ENCODE measurements at regions of chr11 and their contacts with region 1.

Region 1: GRCh38 chr11:65314501-65315203 is at the start of gene CDC42EP2:
- DNase-seq: no peak
- ATAC-seq: peak; percentile 97
- H3K4me3 ChIP-seq: peak within 1 kb of the TSS; percentile 95
- H3K27ac ChIP-seq: no peak within 1 kb of the TSS
- H3K4me1 ChIP-seq: no peaks in the 10 kb centered on the region
- H3K27me3 ChIP-seq: peaks cover 0 to 1% of the 10 kb centered on the region in 2 experiments; a peak in 2 of 4 replicates
- CTCF ChIP-seq: no peak
- EP300 ChIP-seq: no peak
- POLR2A ChIP-seq: no peak
- RAD21 ChIP-seq: no peak
- polyA plus RNA-seq, gene CDC42EP2: 0.07 TPM in 1 of 2 experiments, not detected in the other

Region 2: GRCh38 chr11:65204646-65205601 is 109.7 kb before region 1 on chr11:
- CTCF ChIA-PET with region 1: interaction called, 43 read pairs
- POLR2A ChIA-PET with region 1: no interaction called
- RAD21 ChIA-PET with region 1: interaction called, 3 read pairs
- SMC1A ChIA-PET with region 1: no interaction called
- in situ Hi-C with region 1: no loop called
- intact Hi-C with region 1: loop called (anchors 2 kb)
- DNase-seq: no peak
- ATAC-seq: peak; percentile 90
- H3K4me3 ChIP-seq: no peak overlapping the region
- H3K27ac ChIP-seq: no peak overlapping the region
- H3K4me1 ChIP-seq: no peaks in the 10 kb centered on the region
- H3K27me3 ChIP-seq: no peaks in the 10 kb centered on the region
- CTCF ChIP-seq: peak; percentile 73 to 96 (median 81)
- EP300 ChIP-seq: no peak
- POLR2A ChIP-seq: no peak; the same call in 1 of the 2 replicates
- RAD21 ChIP-seq: peak; percentile 60

Region 3: DNA sequence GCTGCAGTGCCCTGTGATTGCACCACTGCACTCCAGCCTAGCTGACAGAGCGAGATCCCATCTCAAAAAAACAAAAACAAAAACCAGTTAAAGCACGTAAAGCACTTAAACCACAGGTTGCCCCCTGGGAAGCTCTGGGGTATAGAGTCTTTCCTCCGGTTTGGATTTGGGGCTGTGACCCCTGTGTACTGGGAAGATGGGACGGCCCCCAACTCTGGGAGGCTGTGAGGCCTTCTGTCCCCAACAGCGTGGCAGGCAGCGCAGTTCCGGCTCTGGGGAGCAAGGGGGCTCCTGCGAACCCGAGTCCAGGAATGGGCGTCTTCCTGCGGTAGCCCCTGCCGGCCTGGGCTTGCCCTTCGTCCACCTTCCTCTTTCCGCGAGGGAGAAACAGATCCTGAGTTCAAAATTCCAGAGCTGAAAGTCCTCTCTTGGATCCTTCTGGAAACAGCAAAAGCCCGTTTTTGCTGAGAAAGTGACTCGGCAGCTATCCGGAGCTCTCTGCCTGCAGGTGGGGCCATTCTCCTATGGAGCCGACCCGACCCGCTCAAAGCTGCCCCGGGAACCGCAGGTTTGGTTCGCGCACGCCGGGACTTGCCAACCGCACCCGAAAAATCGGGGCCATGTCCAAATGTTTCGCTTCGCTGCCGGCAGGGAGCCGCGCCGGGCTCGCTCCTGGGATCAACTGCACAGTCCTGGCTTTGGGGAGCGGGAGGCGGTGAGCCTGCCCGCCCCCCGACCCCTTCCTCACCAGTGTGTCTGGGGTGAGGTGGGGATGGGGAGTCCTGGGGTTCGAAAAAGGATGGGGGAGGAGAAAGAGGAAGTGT is 89.2 kb before region 1 on chr11:
- CTCF ChIA-PET with region 1: interaction called, 96 read pairs
- POLR2A ChIA-PET with region 1: interaction called, 5 read pairs
- RAD21 ChIA-PET with region 1: interaction called, 21 read pairs
- SMC1A ChIA-PET with region 1: interaction called, 30 read pairs
- in situ Hi-C with region 1: no loop called
- intact Hi-C with region 1: loop called (anchors 2 kb)
- DNase-seq: no peak
- ATAC-seq: peak; percentile 92
- H3K4me3 ChIP-seq: peak overlapping the region; percentile 58
- H3K27ac ChIP-seq: no peak overlapping the region; the same call in 1 of the 2 replicates
- H3K4me1 ChIP-seq: peaks cover 11% of the 10 kb centered on the region
- H3K27me3 ChIP-seq: no peaks in the 10 kb centered on the region; a peak in 1 of 4 replicates
- CTCF ChIP-seq: peak; percentile 52 to 63 (median 53)
- EP300 ChIP-seq: no peak
- POLR2A ChIP-seq: 0 out of 2 replicates have a peak, but pooled peaks have one; percentile 28
- RAD21 ChIP-seq: peak; percentile 55

Region 4: GRCh38 chr11:65274735-65275682 is 39.6 kb before region 1 on chr11:
- CTCF ChIA-PET with region 1: interaction called, 351 read pairs
- POLR2A ChIA-PET with region 1: interaction called, 29 read pairs
- RAD21 ChIA-PET with region 1: interaction called, 254 read pairs
- SMC1A ChIA-PET with region 1: interaction called, 180 read pairs
- in situ Hi-C with region 1: no loop called
- intact Hi-C with region 1: loop called (anchors 1 kb)
- DNase-seq: no peak
- ATAC-seq: peak; percentile 89
- H3K4me3 ChIP-seq: no peak overlapping the region
- H3K27ac ChIP-seq: no peak overlapping the region
- H3K4me1 ChIP-seq: peaks cover 6% of the 10 kb centered on the region; the same call in 1 of the 2 replicates
- H3K27me3 ChIP-seq: no peaks in the 10 kb centered on the region
- CTCF ChIP-seq: peak; percentile 68 to 94 (median 69)
- EP300 ChIP-seq: no peak
- POLR2A ChIP-seq: no peak
- RAD21 ChIP-seq: peak; percentile 90

Region 5: DNA sequence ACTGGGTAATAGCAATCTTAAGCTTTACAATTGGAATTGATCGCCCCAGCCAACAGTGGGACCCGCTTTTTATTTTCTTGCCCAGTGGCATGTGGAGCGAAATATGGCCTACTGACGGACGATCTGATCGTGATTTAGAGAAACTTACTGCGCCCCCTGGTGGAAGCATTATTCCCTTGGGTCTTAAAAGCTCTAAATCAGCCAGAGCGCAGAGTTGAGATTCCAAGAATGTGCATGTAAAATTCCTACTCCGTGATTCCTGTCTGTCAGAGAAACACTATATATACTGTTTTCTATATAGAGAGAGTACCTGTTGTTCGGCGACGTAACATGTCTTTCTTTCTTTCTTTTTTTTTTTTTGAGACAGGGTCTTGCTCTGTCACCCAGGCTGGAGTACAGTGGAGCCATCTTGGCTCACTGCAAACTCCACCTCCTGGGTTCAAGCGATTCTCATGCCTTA is 15.3 kb after region 1 on chr11:
- CTCF ChIA-PET with region 1: interaction called, 261 read pairs
- POLR2A ChIA-PET with region 1: interaction called, 10 read pairs
- RAD21 ChIA-PET with region 1: interaction called, 39 read pairs
- SMC1A ChIA-PET with region 1: interaction called, 28 read pairs
- in situ Hi-C with region 1: no loop called
- intact Hi-C with region 1: no loop called
- DNase-seq: peak; percentile 43
- ATAC-seq: peak; percentile 60
- H3K4me3 ChIP-seq: no peak overlapping the region
- H3K27ac ChIP-seq: no peak overlapping the region
- H3K4me1 ChIP-seq: peaks cover 4% of the 10 kb centered on the region; the same call in 1 of the 2 replicates
- H3K27me3 ChIP-seq: no peaks in the 10 kb centered on the region
- CTCF ChIP-seq: peak; percentile 67 to 79 (median 72)
- EP300 ChIP-seq: no peak
- POLR2A ChIP-seq: no peak
- RAD21 ChIP-seq: peak; percentile 48

Region 6: DNA sequence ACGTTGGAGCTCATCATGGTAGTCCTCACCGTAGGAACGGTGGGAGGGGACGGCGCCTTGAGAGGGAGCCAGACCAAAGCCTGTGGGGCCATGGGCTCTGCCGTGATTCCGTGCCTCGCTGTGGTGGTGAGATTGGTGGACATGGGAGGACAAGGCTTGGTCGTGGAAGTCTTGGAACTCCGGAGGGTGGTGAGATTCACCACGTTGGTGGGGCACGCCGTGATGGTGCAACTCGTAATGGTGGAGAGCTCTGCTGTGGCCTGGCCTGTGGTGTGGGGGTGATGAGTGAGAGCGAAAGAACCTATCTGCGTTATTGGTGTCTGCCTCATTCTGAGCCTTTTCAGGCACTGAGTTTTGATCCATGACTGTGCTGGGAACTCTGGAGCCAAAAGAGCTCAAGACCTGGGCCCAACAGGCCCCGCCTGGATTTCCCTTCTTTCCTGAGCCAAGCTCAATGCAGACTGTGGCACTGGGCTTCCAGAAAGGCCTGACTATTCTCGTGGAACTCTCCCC is 711.4 kb after region 1 on chr11 and contains the start of gene CATSPER1:
- CTCF ChIA-PET with region 1: no interaction called
- POLR2A ChIA-PET with region 1: no interaction called
- RAD21 ChIA-PET with region 1: no interaction called
- SMC1A ChIA-PET with region 1: no interaction called
- in situ Hi-C with region 1: no loop called
- intact Hi-C with region 1: no loop called
- DNase-seq: no peak
- ATAC-seq: no peak
- H3K4me3 ChIP-seq: no peak within 1 kb of the TSS
- H3K27ac ChIP-seq: no peak within 1 kb of the TSS
- H3K4me1 ChIP-seq: no peaks in the 10 kb centered on the region
- H3K27me3 ChIP-seq: 0 out of 4 replicates have a peak, but pooled peaks cover 0 to 3% of the 10 kb centered on the region in 2 experiments
- CTCF ChIP-seq: no peak
- EP300 ChIP-seq: no peak
- POLR2A ChIP-seq: no peak
- RAD21 ChIP-seq: no peak
- polyA plus RNA-seq, gene CATSPER1: 0.02 TPM in 1 of 2 experiments, not detected in the other